ENCODE measurements at regions of chr19 and their contacts with region 1.

Region 1: DNA sequence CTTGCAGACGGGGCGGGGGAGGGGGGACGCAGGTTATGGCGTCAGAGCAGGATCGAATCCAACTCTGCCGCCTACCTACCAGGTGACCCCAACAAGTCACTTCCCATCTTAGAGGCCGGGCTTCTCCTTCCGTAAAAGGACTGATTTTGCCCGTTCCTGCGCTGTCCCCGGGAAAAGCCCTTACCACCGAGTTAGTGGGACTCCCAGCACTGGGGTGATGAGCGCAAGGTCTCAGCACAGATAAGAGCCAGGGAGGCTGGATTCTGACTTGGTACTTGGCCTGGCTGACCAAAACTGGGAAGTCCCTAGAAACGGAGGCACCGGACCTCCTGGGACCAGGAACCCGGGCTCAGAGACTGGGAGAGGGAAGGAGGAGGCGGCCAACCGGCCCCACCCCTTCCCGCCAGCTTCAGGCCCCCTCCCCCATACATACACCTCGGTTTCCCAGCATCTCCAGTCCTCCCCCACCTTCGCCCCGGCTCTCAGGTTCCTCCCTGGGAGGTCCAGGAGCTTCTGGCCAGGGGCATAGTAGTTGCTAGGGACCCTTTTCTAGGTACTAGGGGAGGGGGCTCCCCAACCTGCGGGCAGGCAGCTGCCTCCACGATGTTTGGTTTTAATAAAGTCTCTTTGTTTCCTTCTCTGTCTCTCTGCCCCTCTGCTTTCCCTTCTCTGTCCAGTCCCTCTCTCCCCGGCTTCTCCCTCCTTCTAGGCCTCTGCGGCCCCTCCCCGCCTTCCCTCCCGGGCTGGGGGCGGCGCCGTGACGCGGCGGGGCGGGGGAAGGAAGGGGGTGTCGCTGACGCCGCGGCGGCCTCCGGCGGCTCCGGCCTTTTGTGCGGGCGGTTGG is at the start of gene GRAMD1A:
- DNase-seq: peak; percentile 87
- H3K4me3 ChIP-seq: peak within 1 kb of the TSS; percentile 75 to 91 (median 83)
- H3K27ac ChIP-seq: peak within 1 kb of the TSS; percentile 89
- H3K4me1 ChIP-seq: peaks cover 66% of the 10 kb centered on the region
- H3K27me3 ChIP-seq: no peaks in the 10 kb centered on the region
- CTCF ChIP-seq: no peak
- POLR2A ChIP-seq: peak; percentile 84
- total RNA-seq, gene GRAMD1A: 130 and 139 TPM in 2 replicates

Region 2: GRCh38 chr19:34926685-34927375 is 72.9 kb before region 1 on chr19 and contains the start of gene ZNF30:
- CTCF ChIA-PET with region 1: no interaction called
- POLR2A ChIA-PET with region 1: no interaction called
- dilution Hi-C with region 1: no loop called
- intact Hi-C with region 1: loop called (anchors 10 kb)
- DNase-seq: peak; percentile 92
- H3K4me3 ChIP-seq: peak within 1 kb of the TSS; percentile 39 to 82 (median 50)
- H3K27ac ChIP-seq: no peak within 1 kb of the TSS
- H3K4me1 ChIP-seq: peaks cover 9% of the 10 kb centered on the region
- H3K27me3 ChIP-seq: peaks cover 2 to 5% of the 10 kb centered on the region in 2 experiments
- CTCF ChIP-seq: no peak
- POLR2A ChIP-seq: peak; percentile 71
- total RNA-seq, gene ZNF30: 3.6 and 4.7 TPM in 2 replicates

Region 3: GRCh38 chr19:34943861-34944573 is 55.7 kb before region 1 on chr19:
- CTCF ChIA-PET with region 1: no interaction called
- POLR2A ChIA-PET with region 1: no interaction called
- dilution Hi-C with region 1: no loop called
- intact Hi-C with region 1: no loop called
- DNase-seq: no peak
- H3K4me3 ChIP-seq: no peak overlapping the region
- H3K27ac ChIP-seq: no peak overlapping the region
- H3K4me1 ChIP-seq: no peaks in the 10 kb centered on the region
- H3K27me3 ChIP-seq: no peaks in the 10 kb centered on the region
- CTCF ChIP-seq: no peak
- POLR2A ChIP-seq: peak; percentile 6

Region 4: DNA sequence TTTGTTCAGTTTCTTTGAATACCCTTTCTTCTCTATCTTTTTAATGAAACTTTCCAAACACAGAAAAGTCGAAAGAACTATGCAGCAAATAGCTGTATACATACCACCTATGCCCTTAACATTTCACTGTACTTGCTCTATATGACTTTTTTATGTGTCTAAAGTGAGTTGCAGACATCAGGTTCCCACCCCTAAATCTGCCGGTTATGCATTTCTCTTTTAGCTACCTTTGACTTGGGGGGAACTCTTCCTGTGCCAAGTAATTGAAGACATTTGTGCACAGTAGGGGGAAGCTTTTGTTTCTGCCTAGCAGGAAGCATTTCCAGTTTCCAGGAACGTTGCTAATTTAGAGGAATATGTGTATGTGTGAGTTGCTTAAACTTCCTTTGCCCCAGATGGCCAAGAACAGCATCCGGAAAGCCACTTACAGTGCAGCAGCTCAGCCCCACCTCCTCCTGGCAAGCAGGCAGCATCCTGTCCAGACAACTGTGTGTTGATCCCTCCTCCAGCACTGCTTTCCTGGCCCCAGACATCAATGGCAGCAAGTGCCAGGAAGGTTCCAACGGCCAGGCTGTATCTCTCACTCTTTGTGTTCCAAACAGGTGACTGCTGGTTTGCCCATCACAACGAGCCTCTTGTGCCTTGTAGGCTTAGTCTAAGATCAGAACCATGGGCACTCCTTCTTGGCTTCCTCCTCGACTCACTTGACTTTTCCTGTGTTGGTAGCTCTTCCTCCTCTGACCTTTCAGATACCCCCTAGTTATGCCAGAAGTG is 14.3 kb before region 1 on chr19:
- CTCF ChIA-PET with region 1: interaction called, 7 read pairs
- POLR2A ChIA-PET with region 1: interaction called, 3 read pairs
- dilution Hi-C with region 1: no loop called
- intact Hi-C with region 1: loop called (anchors 1 kb)
- DNase-seq: peak; percentile 89
- H3K4me3 ChIP-seq: peak overlapping the region in 1 of 3 experiments; percentile 0
- H3K27ac ChIP-seq: peak overlapping the region; percentile 34
- H3K4me1 ChIP-seq: peaks cover 15% of the 10 kb centered on the region
- H3K27me3 ChIP-seq: no peaks in the 10 kb centered on the region
- CTCF ChIP-seq: no peak
- POLR2A ChIP-seq: no peak

Region 5: DNA sequence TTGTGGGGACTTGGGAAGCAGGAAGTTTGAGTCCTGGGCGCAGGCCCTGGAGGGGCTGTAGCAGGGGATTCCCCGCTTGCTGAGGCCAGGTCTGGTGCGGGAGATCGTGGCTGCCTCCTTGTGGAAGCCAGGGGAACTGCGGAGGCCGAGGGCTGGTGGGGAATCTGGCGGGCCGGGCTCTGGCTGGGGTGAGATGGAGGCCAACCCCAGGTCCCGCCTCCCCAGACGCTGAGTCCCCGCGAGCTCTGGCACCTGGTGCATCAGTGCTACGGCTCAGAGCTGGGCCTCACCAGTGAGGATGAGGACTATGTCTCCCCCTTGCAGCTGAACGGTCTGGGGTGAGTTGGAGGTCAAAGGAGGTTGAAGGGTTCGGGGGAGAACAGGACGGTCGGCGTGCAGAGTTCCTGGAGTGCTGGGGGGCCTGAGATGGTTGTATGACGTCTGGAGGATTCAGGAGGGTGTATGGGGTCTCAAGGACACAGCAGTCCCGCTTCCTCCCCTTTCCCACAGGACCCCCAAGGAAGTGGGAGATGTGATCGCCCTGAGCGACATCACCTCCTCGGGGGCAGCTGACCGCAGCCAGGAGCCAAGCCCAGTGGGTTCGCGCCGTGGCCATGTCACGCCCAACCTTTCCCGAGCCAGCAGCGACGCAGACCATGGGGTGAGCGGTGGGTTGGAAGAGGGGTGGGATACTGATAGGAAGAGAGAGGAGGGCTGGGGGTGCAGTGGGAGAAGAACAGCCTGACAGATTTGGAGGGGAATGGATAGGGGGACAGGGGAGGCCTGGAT is 13.5 kb after region 1 on chr19:
- CTCF ChIA-PET with region 1: interaction called, 12 read pairs
- POLR2A ChIA-PET with region 1: interaction called, 3 read pairs
- dilution Hi-C with region 1: no loop called
- intact Hi-C with region 1: loop called (anchors 2 kb)
- DNase-seq: peak; percentile 75
- H3K4me3 ChIP-seq: no peak overlapping the region
- H3K27ac ChIP-seq: peak overlapping the region; percentile 10
- H3K4me1 ChIP-seq: peaks cover 3% of the 10 kb centered on the region
- H3K27me3 ChIP-seq: no peaks in the 10 kb centered on the region
- CTCF ChIP-seq: peak; percentile 98 to 99
- POLR2A ChIP-seq: no peak

Measured in endothelial cell of umbilical vein (primary cell).